ENCODE measurements at regions of chr5 and their contacts with region 1.

Region 1: DNA sequence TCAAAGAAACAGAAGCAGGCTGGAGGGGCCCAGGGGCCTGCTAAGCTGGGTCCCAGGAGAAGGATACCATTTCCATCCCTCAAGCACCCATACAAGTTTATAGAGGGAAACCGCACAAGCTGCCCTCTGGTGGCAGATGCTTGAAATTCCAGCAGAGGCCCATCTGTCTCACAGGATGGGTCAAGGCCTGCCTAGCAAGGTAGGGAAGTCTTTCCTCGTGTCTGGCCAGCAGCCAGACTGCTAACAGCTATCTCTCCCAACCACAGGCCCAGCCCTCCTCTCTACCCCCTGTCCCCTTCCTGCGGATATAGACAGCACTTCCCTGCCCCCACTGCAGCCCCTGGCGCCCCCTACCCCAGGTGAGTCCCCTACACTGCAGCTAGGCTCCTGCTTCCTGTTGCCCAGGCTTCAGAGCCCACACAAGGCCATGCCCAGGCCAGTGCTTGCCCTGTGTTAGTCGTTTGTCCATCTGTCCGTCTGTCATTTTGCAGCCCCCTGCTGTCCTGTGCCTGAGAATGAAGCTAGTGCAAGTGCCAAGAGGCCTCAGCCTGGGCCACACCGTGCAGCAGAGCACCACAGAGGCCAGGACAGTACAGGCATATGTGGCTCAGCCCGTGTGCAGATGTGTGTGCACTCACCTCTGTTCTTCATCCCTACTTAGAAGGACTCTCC is 26.2 kb downstream of the TCF7 start:
- DNase-seq: peak; percentile 71
- H3K4me3 Mint-ChIP-seq: no peak overlapping the region
- H3K27ac Mint-ChIP-seq: no peak overlapping the region
- H3K4me1 Mint-ChIP-seq: peaks cover 34% of the 10 kb centered on the region
- H3K27me3 Mint-ChIP-seq: peaks cover 7% of the 10 kb centered on the region

Region 2: DNA sequence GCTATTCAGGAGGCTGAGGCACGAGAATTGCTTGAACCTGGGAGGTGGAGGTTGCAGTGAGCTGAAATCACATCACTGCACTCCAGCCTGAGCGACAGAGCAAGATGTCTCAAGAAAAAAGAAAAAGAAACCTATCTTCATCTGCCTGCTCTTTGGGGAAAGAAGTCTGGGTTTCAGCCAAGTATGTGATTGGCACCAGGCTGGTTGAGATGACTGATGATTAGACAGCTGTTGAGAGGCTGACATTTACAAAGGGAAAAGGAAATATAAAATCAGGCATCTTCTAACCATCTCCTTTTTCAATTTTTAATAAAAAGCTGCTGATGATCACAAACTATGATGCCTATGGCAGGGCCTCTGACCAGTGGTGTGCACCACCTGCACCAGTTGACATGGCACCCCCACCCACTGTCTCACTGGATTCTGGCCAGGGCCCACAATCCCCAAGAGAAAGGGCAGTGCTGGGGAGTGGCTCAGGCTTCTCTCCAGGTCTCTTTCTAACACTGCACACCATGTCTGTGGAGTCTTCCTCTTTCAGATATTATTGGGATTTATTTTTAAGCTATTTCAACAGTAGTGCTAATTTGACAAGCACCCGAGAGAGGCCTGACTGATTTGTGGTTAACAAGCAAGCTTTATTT is 155.0 kb before region 1 on chr5:
- CTCF ChIA-PET with region 1: no interaction called
- POLR2A ChIA-PET with region 1: no interaction called
- DNase-seq: no peak
- H3K4me3 Mint-ChIP-seq: no peak overlapping the region
- H3K27ac Mint-ChIP-seq: no peak overlapping the region
- H3K4me1 Mint-ChIP-seq: peaks cover 12% of the 10 kb centered on the region
- H3K27me3 Mint-ChIP-seq: no peaks in the 10 kb centered on the region

Region 3: DNA sequence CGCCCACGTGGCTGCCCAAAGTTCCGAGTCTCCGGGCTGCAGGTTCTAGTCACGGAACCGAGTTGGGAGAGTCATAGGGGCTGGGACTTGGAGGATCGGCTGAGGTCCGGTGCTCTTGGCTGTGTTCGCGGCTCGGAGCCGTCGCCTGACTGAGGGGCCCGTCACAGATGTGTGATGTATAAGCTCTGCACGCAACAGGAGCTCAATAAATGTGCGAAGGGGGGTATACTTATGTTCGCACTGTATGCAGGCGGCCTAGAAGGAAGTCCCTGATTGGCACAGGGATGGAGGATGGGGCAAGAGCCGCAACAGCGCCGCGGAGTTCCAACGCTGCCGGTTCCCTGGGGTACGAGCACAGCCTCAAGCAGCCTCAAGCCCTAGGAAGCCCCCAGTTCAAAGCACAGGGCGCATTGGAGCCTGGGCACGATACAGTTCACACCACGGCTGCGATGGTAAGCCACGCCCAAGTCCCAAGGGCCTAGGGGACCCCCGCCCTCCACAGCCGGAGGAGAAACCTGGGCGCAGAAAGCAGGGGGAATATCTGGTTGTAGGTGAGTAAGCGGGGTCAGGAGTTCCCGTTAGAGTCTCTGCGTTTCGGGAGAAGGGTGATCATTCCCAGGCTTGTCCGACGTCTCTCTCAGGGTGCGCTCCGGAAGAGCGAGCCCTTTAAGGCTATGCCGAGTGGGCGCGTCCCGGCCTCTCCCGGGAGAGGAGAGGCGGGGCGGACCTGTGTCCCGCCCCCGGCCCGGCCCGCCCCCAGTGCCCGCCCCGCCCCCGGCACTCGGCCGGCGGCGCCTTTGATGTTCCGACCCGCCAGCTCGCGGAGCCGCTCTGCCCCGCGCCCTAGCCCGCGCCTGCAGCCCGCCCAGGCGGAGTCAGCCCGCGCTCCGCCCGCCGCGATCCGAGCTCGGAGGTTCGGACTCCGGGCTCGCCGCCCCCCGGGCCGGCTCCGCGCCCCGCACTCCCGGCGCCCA is 26.5 kb before region 1 on chr5 and contains the start of gene TCF7:
- CTCF ChIA-PET with region 1: interaction called, 14 read pairs
- POLR2A ChIA-PET with region 1: interaction called, 8 read pairs
- DNase-seq: peak; percentile 76
- H3K4me3 Mint-ChIP-seq: peak within 1 kb of the TSS; percentile 78
- H3K27ac Mint-ChIP-seq: no peak within 1 kb of the TSS
- H3K4me1 Mint-ChIP-seq: peaks cover 57% of the 10 kb centered on the region
- H3K27me3 Mint-ChIP-seq: peaks cover 67% of the 10 kb centered on the region
- total RNA-seq, gene TCF7: 19.2 to 21.9 TPM

Region 4: DNA sequence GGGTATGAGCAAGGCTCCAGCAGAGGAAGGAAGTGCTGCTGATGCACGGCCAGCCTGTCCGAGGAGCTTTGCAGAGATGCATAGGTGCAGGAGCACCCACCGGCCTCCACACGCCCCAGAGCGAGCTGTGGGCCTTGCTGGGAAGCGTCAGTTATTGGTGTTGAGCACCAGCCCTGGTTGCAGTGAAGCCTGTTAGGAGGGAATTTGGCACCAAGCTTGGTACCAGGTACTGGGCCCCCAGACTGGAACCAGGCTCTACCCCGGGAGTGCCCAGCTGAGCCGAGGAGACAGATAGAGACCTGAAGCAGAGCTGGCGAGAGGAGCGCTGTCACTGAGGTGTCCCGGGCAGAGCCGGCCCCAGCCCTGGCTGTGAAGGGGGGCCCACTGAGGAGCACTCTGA is 20.9 kb before region 1 on chr5:
- CTCF ChIA-PET with region 1: interaction called, 12 read pairs
- POLR2A ChIA-PET with region 1: interaction called, 12 read pairs
- DNase-seq: no peak
- H3K4me3 Mint-ChIP-seq: no peak overlapping the region
- H3K27ac Mint-ChIP-seq: no peak overlapping the region
- H3K4me1 Mint-ChIP-seq: peaks cover 61% of the 10 kb centered on the region
- H3K27me3 Mint-ChIP-seq: peaks cover 61% of the 10 kb centered on the region

Region 5: DNA sequence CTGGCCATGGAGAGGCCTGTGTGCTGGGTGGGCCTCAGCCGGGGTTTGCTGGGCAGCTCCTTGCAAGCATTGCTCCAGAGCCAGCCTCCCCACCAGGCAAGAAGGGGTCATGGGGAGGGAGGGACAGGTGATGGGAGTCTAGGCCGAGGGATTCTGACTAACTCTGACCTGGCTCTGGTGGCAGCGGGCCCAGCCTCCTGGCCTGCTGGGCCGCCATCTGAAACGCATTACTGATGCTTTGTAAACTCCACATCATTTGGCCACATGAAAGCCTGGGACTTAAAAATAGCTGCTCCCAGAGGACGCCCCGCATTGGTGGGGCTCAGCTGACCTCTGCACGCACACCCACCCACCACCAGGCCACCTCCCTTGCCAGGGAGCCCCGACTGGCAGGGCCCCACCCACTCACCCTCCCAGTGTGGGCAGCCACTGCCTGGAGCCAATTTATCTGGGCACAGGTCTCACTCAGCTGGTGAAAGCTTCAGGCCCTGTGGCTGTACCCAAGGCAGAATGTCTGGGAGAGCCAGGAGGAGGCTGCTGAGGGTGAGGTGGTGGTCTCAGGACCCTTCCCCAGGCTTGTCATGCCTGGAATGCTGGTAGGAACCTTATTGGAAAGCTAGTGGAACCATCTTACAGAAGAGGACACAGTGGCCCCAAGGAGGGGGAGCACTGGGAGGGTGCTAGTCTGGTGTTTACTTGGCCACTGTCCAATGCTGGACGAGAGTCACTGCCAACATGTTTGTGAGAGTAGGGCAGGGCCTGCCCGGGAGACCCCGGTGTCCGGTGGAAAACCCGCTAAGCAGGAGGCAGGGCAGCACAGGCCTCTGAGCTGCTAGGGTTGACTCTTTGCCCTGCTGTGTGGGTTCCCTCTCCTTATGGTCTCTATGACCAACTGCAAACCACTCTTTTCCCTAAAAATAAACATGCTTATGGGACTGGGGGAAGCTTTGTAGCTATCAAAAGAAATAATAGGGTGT is 15.3 kb before region 1 on chr5:
- CTCF ChIA-PET with region 1: interaction called, 10 read pairs
- POLR2A ChIA-PET with region 1: interaction called, 23 read pairs
- DNase-seq: no peak
- H3K4me3 Mint-ChIP-seq: no peak overlapping the region
- H3K27ac Mint-ChIP-seq: no peak overlapping the region
- H3K4me1 Mint-ChIP-seq: peaks cover 72% of the 10 kb centered on the region
- H3K27me3 Mint-ChIP-seq: peaks cover 39% of the 10 kb centered on the region

Region 6: DNA sequence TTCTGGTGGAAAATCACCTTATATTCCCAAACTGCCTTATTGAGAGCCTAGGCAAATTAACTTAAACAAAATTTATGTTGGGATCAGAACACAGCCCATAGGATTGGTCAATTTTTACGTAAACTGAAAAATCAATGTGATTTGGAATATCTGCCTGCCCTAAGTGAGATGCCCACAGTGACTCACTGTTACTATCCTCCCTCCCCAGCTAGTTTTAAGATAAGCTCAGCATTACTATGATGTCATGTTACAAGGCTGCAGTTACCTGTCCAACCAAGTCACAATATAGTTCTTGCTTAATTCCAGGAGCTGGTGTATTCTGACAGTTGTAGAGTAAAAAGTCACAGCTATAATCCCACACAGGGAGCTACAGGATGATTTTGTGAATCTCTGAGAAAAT is 13.0 kb after region 1 on chr5:
- CTCF ChIA-PET with region 1: interaction called, 21 read pairs
- POLR2A ChIA-PET with region 1: interaction called, 6 read pairs
- DNase-seq: no peak
- H3K4me3 Mint-ChIP-seq: no peak overlapping the region
- H3K27ac Mint-ChIP-seq: no peak overlapping the region
- H3K4me1 Mint-ChIP-seq: peaks cover 11% of the 10 kb centered on the region
- H3K27me3 Mint-ChIP-seq: no peaks in the 10 kb centered on the region